K562 (cell line): ENCODE measurements at regions of chr17 and their contacts with region 1.

Region 1: DNA sequence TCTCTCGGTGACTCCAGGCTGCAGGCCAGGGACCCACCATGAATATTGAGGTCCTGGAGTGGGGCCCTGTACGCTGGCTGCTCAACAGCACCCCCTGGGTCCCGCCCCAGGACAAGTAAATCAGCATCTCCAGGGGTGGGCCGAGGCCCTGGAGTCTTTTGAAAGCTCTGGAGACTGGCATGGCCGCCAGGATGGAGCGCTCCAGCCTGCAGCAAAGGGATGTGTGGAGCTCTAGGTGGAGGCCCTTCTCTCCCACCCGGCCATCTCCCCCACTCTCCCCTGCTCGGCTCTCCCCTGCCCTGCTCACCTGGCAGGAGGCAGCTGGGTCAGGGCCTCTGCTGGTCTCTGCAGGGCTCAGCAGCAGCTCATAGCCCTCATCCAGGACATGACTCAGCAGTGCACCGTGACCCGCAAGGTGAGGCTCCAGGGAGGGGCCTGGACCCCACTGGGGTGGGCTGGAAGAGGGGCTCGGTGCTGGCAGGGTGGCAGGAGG is 16.6 kb downstream of the SGSH start:
- DNase-seq: no peak
- ATAC-seq: peak; percentile 44; the same call in 2 of the 3 replicates
- H3K4me3 ChIP-seq: no peak overlapping the region
- H3K27ac ChIP-seq: no peak overlapping the region
- H3K4me1 ChIP-seq: peaks cover 0 to 20% of the 10 kb centered on the region in 2 experiments; a peak in 2 of 5 replicates
- H3K27me3 ChIP-seq: no peaks in the 10 kb centered on the region
- CTCF ChIP-seq: peak in 1 of 3 experiments; percentile 19; a peak in 1 of 6 replicates
- EP300 ChIP-seq: no peak
- POLR2A ChIP-seq: no peak
- RAD21 ChIP-seq: no peak

Region 2: DNA sequence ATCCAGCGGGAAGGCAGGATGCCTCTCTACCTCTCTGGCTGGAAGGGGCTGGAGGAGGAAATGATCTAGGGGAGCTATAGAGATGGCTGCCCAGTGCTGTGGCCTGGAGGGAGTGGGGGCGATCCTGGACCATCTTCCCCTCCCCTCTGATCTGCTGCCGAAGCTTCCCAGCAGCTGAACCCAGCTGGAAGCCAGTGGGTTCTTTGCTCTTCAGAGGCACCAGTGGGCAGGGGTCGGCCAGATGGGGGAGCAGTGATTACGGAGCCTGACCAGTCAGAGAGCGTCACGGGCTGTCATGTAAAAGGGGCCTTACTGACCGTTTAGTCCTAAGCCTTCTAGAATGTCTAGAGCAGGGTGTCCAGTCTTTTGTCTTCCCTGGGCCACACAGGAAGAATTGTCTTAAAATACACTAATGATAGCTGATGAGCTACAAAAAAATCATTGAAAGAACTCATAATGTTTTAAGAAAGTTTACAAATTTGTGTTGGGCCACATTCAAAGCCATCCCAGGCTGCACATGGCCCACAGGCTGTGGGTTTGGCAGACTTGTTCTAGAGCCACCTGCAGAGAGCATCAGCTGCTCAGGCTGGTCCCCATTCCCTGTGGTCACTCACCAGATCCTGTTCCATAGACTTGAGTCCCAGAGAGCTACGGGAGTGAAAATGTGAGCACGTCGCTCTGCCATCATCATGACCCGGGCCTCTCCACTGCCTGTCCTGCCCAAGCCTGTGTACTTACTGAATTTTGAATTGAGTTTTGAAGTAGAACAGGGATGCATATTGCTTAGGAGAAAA is 23.4 kb after region 1 on chr17:
- CTCF ChIA-PET with region 1: no interaction called
- POLR2A ChIA-PET with region 1: no interaction called
- in situ Hi-C with region 1: no loop called
- intact Hi-C with region 1: no loop called
- DNase-seq: no peak
- ATAC-seq: no peak
- H3K4me3 ChIP-seq: no peak overlapping the region
- H3K27ac ChIP-seq: no peak overlapping the region
- H3K4me1 ChIP-seq: peaks cover 0 to 17% of the 10 kb centered on the region in 2 experiments; a peak in 2 of 5 replicates
- H3K27me3 ChIP-seq: no peaks in the 10 kb centered on the region
- CTCF ChIP-seq: no peak
- EP300 ChIP-seq: no peak
- POLR2A ChIP-seq: no peak
- RAD21 ChIP-seq: no peak

Region 3: DNA sequence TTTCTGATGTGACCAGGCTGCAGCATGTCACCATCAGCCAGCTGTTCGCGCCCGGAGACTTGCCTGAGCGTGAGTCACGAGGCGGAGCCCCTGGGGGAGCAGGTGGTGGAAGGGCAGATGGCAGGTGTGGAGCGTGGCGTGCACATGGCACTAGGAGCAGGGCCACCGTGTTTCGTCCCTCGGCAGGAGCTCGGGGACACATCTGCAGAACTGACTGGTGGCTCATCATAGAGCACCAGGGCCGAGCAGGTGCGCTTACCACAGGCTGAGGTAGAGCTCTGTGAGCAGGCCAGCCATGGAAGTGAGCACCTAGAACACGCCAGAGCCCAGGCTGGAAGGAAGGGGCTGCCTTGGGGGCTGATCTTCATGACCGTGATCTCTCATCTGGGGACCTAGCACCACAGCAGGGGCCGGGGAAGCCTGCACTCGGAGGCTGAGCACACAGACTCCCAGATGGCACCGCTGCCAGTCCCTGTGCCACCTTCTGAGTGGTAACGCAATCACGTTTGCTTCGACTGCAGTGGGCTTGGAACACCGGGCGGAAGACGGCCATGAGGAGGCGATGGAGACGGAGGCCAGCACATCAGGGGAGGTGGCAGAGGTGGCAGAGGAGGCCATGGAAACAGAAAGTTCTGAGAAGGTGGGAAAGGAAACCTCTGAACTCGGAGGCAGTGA is 149.6 kb after region 1 on chr17:
- CTCF ChIA-PET with region 1: no interaction called
- POLR2A ChIA-PET with region 1: no interaction called
- in situ Hi-C with region 1: loop called (anchors 5 kb)
- intact Hi-C with region 1: no loop called
- DNase-seq: no peak
- ATAC-seq: no peak
- H3K4me3 ChIP-seq: no peak overlapping the region
- H3K27ac ChIP-seq: no peak overlapping the region
- H3K4me1 ChIP-seq: peaks cover 0 to 4% of the 10 kb centered on the region in 2 experiments; a peak in 1 of 5 replicates
- H3K27me3 ChIP-seq: no peaks in the 10 kb centered on the region
- CTCF ChIP-seq: no peak
- EP300 ChIP-seq: no peak
- POLR2A ChIP-seq: no peak
- RAD21 ChIP-seq: no peak